Gastrocnemius medialis (tissue), 4 donors: ENCODE measurements at regions of chr7 and their contacts with region 1.

Region 1: DNA sequence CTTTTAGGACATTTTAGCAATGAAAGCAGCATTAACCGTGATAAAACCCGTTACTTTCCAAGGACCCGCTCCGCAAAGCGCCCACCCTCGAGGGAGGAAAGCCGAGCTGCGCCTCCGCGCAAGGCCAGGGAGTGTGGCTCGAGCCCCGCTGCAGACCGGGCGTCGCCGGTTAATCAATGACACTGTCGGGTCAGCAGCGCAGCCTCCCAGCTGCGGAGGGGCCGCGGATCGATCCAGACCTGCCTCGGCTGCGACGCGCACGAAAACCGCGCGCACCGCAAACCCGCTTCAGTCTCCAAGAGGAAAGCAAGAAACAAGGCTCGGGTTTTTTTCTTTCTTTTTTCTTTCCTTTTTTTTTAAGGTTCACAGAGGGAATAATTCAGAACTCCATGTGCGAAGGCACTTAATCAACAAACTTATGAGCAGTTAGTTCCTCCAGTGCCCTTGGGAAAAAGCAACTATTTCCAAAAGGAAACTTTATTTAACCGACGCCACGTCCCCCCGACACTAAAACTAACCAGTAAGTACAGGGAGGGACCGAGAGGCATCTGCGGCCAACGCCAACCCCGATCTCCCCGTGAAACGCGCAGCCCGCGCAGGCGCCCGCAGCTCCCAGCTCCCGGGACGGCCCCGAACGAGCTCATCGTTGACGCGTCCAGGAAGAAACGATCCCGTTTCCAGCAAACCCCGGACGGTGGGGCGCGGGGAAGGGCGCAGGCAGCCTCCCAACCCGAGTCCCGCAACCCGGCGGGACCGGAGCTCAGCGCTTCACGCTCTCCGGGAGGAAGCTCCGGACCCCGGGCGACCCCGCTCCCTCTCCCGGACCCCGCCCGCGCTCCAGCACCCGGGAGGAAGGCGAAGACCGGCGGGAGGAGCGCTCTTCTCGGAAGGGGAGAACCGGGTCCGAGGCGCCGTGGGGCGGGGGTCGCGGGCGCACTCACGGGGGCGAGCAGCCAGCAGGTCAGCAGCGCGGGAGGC is 598 bp downstream of the VIPR2 start:
- DNase-seq: no peak
- ATAC-seq: peak in 1 of 2 donors; percentile 35
- H3K4me3 ChIP-seq: peak overlapping the region; percentile 63 to 79 (median 65)
- H3K27ac ChIP-seq: no peak overlapping the region
- H3K4me1 ChIP-seq: peaks cover 10 to 11% of the 10 kb centered on the region in 2 donors
- H3K27me3 ChIP-seq: peaks cover 0 to 16% (median 7%) of the 10 kb centered on the region in 3 donors
- CTCF ChIP-seq: no peak
- POLR2A ChIP-seq: no peak

Region 2: GRCh38 chr7:159030490-159031134 is 113.5 kb before region 1 on chr7:
- in situ Hi-C with region 1: no loop called
- intact Hi-C with region 1: loop called (anchors 5 kb)
- DNase-seq: peak in 1 of 2 donors; percentile 57
- ATAC-seq: peak; percentile 72 to 85
- H3K4me3 ChIP-seq: peak overlapping the region; percentile 60 to 82 (median 68)
- H3K27ac ChIP-seq: peak overlapping the region; percentile 47 to 78 (median 66)
- H3K4me1 ChIP-seq: peaks cover 0 to 8% of the 10 kb centered on the region in 2 donors
- H3K27me3 ChIP-seq: no peaks in the 10 kb centered on the region
- CTCF ChIP-seq: peak; percentile 25 to 62 (median 41)
- POLR2A ChIP-seq: no peak

Region 3: GRCh38 chr7:159318708-159319351 is 174.8 kb after region 1 on chr7:
- in situ Hi-C with region 1: no loop called
- intact Hi-C with region 1: no loop called
- DNase-seq: no peak
- ATAC-seq: no peak
- H3K4me3 ChIP-seq: no peak overlapping the region
- H3K27ac ChIP-seq: no peak overlapping the region
- H3K4me1 ChIP-seq: no peaks in the 10 kb centered on the region
- H3K27me3 ChIP-seq: no peaks in the 10 kb centered on the region
- CTCF ChIP-seq: no peak
- POLR2A ChIP-seq: no peak